Activated naive CD4-positive, alpha-beta T cell treated with anti-CD3 and anti-CD28 coated beads, Interleukin-2, amount 10 ng/mL, durations not matched to agents 7 days and 5 days (primary cell): ENCODE measurements at regions of chr6 and their contacts with region 1.

Region 1: GRCh38 chr6:96897383-96898240 is at the start of gene NDUFAF4:
- DNase-seq: peak; percentile 96
- H3K4me3 Mint-ChIP-seq: peak within 1 kb of the TSS; percentile 92
- H3K27ac Mint-ChIP-seq: peak within 1 kb of the TSS; percentile 88
- H3K4me1 Mint-ChIP-seq: peaks cover 33% of the 10 kb centered on the region
- H3K27me3 Mint-ChIP-seq: peaks cover 3% of the 10 kb centered on the region

Region 2: GRCh38 chr6:96844530-96844929 is 53.1 kb before region 1 on chr6:
- CTCF ChIA-PET with region 1: no interaction called
- DNase-seq: no peak
- H3K4me3 Mint-ChIP-seq: no peak overlapping the region
- H3K27ac Mint-ChIP-seq: no peak overlapping the region
- H3K4me1 Mint-ChIP-seq: no peaks in the 10 kb centered on the region
- H3K27me3 Mint-ChIP-seq: peaks cover 29% of the 10 kb centered on the region

Region 3: GRCh38 chr6:96923871-96924493 is 26.4 kb after region 1 on chr6:
- CTCF ChIA-PET with region 1: interaction called, 11 read pairs
- DNase-seq: no peak
- H3K4me3 Mint-ChIP-seq: peak overlapping the region; percentile 92
- H3K27ac Mint-ChIP-seq: peak overlapping the region; percentile 89
- H3K4me1 Mint-ChIP-seq: peaks cover 37% of the 10 kb centered on the region
- H3K27me3 Mint-ChIP-seq: peaks cover 10% of the 10 kb centered on the region